ENCODE measurements at regions of chr5 and their contacts with region 1.

Region 1: GRCh38 chr5:160119142-160119904 is at the start of gene PWWP2A:
- DNase-seq: peak; percentile 97 to 100
- H3K4me3 ChIP-seq: peak within 1 kb of the TSS; percentile 87 to 99
- H3K27ac ChIP-seq: peak within 1 kb of the TSS; percentile 92 to 98
- H3K4me1 ChIP-seq: peaks cover 0 to 6% of the 10 kb centered on the region in 2 donors
- H3K27me3 ChIP-seq: no peaks in the 10 kb centered on the region
- CTCF ChIP-seq: peak in 1 of 3 experiments; percentile 14
- total RNA-seq, gene PWWP2A: 43.4 TPM

Region 2: GRCh38 chr5:159854916-159855315 is 264.4 kb before region 1 on chr5:
- intact Hi-C with region 1: no loop called
- DNase-seq: no peak
- H3K4me3 ChIP-seq: no peak overlapping the region
- H3K27ac ChIP-seq: no peak overlapping the region
- H3K4me1 ChIP-seq: peaks cover 0 to 7% of the 10 kb centered on the region in 2 donors
- H3K27me3 ChIP-seq: no peaks in the 10 kb centered on the region
- CTCF ChIP-seq: no peak

Region 3: DNA sequence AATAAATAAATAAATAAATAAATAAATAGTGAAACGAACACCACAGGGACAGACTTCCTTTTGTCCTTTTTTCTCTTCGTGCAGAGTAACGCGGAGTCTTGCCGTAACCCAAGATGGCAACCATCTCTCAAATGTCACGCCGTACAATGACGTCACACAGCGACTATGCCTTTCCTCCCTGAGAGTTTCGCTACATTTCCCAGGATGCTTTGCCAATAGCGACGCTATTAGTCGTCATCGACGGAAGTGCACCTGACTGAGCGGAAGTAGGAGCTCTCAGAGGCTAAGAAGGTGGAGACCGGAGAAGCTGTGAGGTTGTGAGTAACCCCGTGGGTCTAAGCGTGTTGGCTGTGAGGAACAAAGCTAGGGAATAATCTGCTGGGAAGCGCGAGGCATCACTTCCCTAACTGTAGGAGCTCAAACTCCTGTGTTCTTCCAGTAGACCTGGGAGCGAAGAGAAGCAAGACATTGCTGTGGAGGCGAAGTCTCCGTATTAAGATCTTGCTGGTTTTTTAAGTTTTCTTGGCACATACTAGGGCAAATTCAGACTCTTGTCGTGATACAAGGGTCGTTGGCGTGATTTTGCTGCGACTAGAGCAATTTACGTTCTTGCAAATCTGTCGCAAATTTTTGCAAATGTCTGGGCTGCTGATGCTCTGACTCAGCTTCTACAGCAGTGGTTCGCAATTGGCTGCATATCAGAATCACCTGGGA is 110.3 kb before region 1 on chr5 and contains the start of gene TTC1:
- intact Hi-C with region 1: loop called (anchors 2 kb)
- DNase-seq: peak; percentile 91 to 99
- H3K4me3 ChIP-seq: peak within 1 kb of the TSS; percentile 72 to 74
- H3K27ac ChIP-seq: peak within 1 kb of the TSS; percentile 80 to 81
- H3K4me1 ChIP-seq: peaks cover 4 to 10% of the 10 kb centered on the region in 2 donors
- H3K27me3 ChIP-seq: no peaks in the 10 kb centered on the region
- CTCF ChIP-seq: no peak
- total RNA-seq, gene TTC1: 13.7 TPM

Region 4: DNA sequence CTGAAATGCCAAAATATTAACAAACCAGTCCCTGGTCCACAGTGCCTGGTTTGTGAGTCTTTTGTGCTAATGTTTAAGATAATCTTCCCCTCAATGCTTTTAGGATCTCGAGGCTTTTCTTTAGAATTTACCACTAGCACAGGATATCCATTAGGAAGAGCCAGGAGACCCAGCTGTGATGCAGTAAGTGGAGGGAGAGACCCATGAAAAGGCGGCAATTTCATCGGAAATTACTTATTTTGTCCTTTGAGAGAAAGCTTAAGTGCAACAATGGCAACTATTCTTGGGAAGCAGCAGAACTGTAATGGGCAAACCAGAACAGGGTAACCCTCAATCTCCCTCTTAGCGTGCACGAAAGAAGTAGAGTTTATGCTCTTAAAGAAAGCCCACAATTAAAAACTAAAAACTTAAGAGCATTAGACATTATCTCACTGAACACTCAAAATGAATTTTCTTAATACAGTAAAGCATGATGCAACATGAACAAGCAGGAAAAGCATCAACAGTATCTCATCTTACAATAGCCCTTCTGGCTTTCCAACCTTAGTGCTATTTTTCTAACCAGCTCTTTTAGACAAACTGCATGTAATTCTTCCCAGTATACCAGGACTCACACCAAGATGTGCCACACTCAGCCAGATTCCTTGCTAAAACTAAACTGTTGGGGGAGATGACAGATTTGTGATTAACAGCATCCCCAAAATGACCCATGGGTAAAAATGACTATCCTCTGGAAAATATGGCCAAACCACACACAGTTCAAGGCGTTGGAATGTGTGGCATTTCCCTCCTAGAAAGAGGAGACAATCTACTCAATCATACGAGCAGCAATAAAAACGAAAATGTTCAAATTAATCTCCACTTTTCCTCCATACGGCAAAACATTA is 36.5 kb before region 1 on chr5:
- intact Hi-C with region 1: loop called (anchors 1 kb)
- DNase-seq: no peak
- H3K4me3 ChIP-seq: peak overlapping the region in 1 of 2 donors; percentile 8
- H3K27ac ChIP-seq: peak overlapping the region; percentile 14 to 58
- H3K4me1 ChIP-seq: peaks cover 0 to 26% of the 10 kb centered on the region in 2 donors
- H3K27me3 ChIP-seq: no peaks in the 10 kb centered on the region
- CTCF ChIP-seq: no peak

Region 5: GRCh38 chr5:160151017-160151416 is 31.7 kb after region 1 on chr5:
- intact Hi-C with region 1: no loop called
- DNase-seq: no peak
- H3K4me3 ChIP-seq: no peak overlapping the region
- H3K27ac ChIP-seq: no peak overlapping the region
- H3K4me1 ChIP-seq: no peaks in the 10 kb centered on the region
- H3K27me3 ChIP-seq: no peaks in the 10 kb centered on the region
- CTCF ChIP-seq: no peak

Region 6: GRCh38 chr5:160165137-160166068 is 46.1 kb after region 1 on chr5:
- intact Hi-C with region 1: loop called (anchors 1 kb)
- DNase-seq: peak; percentile 78 to 96
- H3K4me3 ChIP-seq: peak overlapping the region in 1 of 2 donors; percentile 43
- H3K27ac ChIP-seq: peak overlapping the region; percentile 88 to 92
- H3K4me1 ChIP-seq: peaks cover 9 to 27% of the 10 kb centered on the region in 2 donors
- H3K27me3 ChIP-seq: no peaks in the 10 kb centered on the region
- CTCF ChIP-seq: no peak

Region 7: GRCh38 chr5:160399402-160400353 is 280.4 kb after region 1 on chr5 and contains the start of gene FAM200C:
- intact Hi-C with region 1: loop called (anchors 5 kb)
- DNase-seq: peak; percentile 71 to 93
- H3K4me3 ChIP-seq: peak within 1 kb of the TSS; percentile 72 to 82
- H3K27ac ChIP-seq: peak within 1 kb of the TSS; percentile 81 to 89
- H3K4me1 ChIP-seq: peaks cover 7 to 13% of the 10 kb centered on the region in 2 donors
- H3K27me3 ChIP-seq: no peaks in the 10 kb centered on the region
- CTCF ChIP-seq: no peak
- total RNA-seq, gene FAM200C: not detected

Measured in ascending aorta (tissue), 2 donors.